GM12878 (cell line): ENCODE measurements at regions of chr1 and their contacts with region 1.

Region 1: GRCh38 chr1:172338295-172338735 is 82.2 kb upstream of the C1orf105 start:
- DNase-seq: peak; percentile 74
- ATAC-seq: peak; percentile 74
- H3K4me3 ChIP-seq: peak overlapping the region; percentile 28; the same call in 1 of the 2 replicates
- H3K27ac ChIP-seq: peak overlapping the region; percentile 98
- H3K4me1 ChIP-seq: peaks cover 44% of the 10 kb centered on the region
- H3K27me3 ChIP-seq: no peaks in the 10 kb centered on the region
- CTCF ChIP-seq: no peak
- EP300 ChIP-seq: peak in 1 of 2 experiments; percentile 34; a peak in 1 of 4 replicates
- POLR2A ChIP-seq: no peak
- RAD21 ChIP-seq: no peak

Region 2: DNA sequence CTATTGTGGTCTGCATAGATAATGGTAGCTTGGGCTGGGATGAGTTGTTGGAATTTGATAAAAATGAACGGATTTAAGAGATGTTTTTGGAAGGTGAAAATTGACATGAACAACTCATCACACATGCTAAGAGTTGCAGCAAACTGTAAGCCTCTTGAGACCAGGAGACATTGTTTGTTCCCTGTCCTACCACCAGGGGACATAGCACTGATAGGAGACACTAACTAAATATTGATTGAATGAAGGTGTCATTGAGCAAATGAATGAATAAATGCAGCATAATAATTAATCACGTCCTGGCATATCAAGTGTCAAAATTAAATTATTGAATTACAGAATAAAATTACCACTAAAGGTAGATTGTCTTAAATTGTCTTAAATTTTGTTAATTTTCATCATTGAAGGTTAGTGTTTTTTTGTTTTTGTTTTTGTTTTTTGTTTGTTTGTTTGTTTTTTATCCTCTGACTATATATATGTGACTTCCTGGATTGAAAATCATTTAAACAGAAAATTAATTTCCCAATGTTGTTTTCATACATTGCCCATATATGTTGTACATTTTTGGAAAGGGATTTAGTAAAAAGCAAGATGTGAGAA is 203.1 kb before region 1 on chr1:
- CTCF ChIA-PET with region 1: no interaction called
- POLR2A ChIA-PET with region 1: no interaction called
- RAD21 ChIA-PET with region 1: interaction called, 5 read pairs
- SMC1A ChIA-PET with region 1: interaction called, 12 read pairs
- in situ Hi-C with region 1: no loop called
- intact Hi-C with region 1: no loop called
- DNase-seq: no peak
- ATAC-seq: peak; percentile 62
- H3K4me3 ChIP-seq: no peak overlapping the region
- H3K27ac ChIP-seq: no peak overlapping the region
- H3K4me1 ChIP-seq: no peaks in the 10 kb centered on the region
- H3K27me3 ChIP-seq: no peaks in the 10 kb centered on the region
- CTCF ChIP-seq: peak; percentile 35 to 63 (median 56)
- EP300 ChIP-seq: no peak
- POLR2A ChIP-seq: no peak
- RAD21 ChIP-seq: peak; percentile 77

Region 3: DNA sequence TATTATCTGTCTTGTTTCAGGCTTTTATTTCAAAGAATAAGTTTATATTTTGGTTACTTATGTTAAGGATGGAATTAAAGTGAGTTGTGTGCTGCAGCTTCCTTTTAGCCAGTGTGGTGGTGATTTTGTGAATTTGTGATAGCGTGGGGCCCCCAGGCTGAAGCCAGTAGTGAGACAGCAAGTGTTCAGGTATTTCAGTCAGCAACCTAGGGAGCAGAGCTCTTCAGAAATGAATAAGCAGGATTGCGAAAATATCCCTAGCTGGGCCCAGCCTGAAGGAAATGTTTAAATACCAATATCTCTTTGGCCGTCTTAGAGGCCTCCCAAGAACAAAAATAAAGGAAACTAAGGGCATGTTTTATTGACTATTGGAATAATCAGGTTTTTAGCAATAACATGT is 68.7 kb before region 1 on chr1:
- CTCF ChIA-PET with region 1: interaction called, 5 read pairs
- POLR2A ChIA-PET with region 1: interaction called, 5 read pairs
- RAD21 ChIA-PET with region 1: interaction called, 7 read pairs
- SMC1A ChIA-PET with region 1: interaction called, 7 read pairs
- in situ Hi-C with region 1: no loop called
- intact Hi-C with region 1: loop called (anchors 5 kb)
- DNase-seq: no peak
- ATAC-seq: no peak
- H3K4me3 ChIP-seq: no peak overlapping the region
- H3K27ac ChIP-seq: no peak overlapping the region
- H3K4me1 ChIP-seq: peaks cover 19% of the 10 kb centered on the region
- H3K27me3 ChIP-seq: no peaks in the 10 kb centered on the region
- CTCF ChIP-seq: no peak
- EP300 ChIP-seq: no peak
- POLR2A ChIP-seq: no peak
- RAD21 ChIP-seq: no peak

Region 4: GRCh38 chr1:172373864-172374263 is 35.5 kb after region 1 on chr1:
- CTCF ChIA-PET with region 1: interaction called, 32 read pairs
- POLR2A ChIA-PET with region 1: interaction called, 3 read pairs
- RAD21 ChIA-PET with region 1: interaction called, 16 read pairs
- SMC1A ChIA-PET with region 1: interaction called, 222 read pairs
- in situ Hi-C with region 1: no loop called
- intact Hi-C with region 1: no loop called
- DNase-seq: no peak
- ATAC-seq: no peak; the same call in 2 of the 3 replicates
- H3K4me3 ChIP-seq: no peak overlapping the region
- H3K27ac ChIP-seq: no peak overlapping the region
- H3K4me1 ChIP-seq: peaks cover 4% of the 10 kb centered on the region; the same call in 1 of the 2 replicates
- H3K27me3 ChIP-seq: no peaks in the 10 kb centered on the region
- CTCF ChIP-seq: no peak
- EP300 ChIP-seq: no peak
- POLR2A ChIP-seq: no peak
- RAD21 ChIP-seq: no peak

Region 5: GRCh38 chr1:172497230-172497629 is 158.9 kb after region 1 on chr1:
- CTCF ChIA-PET with region 1: no interaction called
- POLR2A ChIA-PET with region 1: no interaction called
- RAD21 ChIA-PET with region 1: no interaction called
- SMC1A ChIA-PET with region 1: no interaction called
- in situ Hi-C with region 1: no loop called
- intact Hi-C with region 1: no loop called
- DNase-seq: no peak
- ATAC-seq: no peak
- H3K4me3 ChIP-seq: no peak overlapping the region
- H3K27ac ChIP-seq: no peak overlapping the region
- H3K4me1 ChIP-seq: no peaks in the 10 kb centered on the region
- H3K27me3 ChIP-seq: peaks cover 0 to under 1% of the 10 kb centered on the region in 2 experiments; a peak in 2 of 4 replicates
- CTCF ChIP-seq: no peak
- EP300 ChIP-seq: no peak
- POLR2A ChIP-seq: no peak
- RAD21 ChIP-seq: no peak